ENCODE measurements at regions of chr1 and their contacts with region 1.

Region 1: GRCh38 chr1:22861764-22862440 is 110.8 kb downstream of the LACTBL1 start:
- DNase-seq: peak; percentile 86
- H3K4me3 ChIP-seq: no peak overlapping the region; a peak in 1 of 4 replicates
- H3K27ac ChIP-seq: peak overlapping the region; percentile 31 to 45; a peak in 3 of 4 replicates
- H3K4me1 ChIP-seq: peaks cover 4 to 9% of the 10 kb centered on the region in 2 experiments; a peak in 3 of 4 replicates
- H3K27me3 ChIP-seq: no peaks in the 10 kb centered on the region
- CTCF ChIP-seq: peak; percentile 98
- EP300 ChIP-seq: no peak
- RAD21 ChIP-seq: peak; percentile 88

Region 2: DNA sequence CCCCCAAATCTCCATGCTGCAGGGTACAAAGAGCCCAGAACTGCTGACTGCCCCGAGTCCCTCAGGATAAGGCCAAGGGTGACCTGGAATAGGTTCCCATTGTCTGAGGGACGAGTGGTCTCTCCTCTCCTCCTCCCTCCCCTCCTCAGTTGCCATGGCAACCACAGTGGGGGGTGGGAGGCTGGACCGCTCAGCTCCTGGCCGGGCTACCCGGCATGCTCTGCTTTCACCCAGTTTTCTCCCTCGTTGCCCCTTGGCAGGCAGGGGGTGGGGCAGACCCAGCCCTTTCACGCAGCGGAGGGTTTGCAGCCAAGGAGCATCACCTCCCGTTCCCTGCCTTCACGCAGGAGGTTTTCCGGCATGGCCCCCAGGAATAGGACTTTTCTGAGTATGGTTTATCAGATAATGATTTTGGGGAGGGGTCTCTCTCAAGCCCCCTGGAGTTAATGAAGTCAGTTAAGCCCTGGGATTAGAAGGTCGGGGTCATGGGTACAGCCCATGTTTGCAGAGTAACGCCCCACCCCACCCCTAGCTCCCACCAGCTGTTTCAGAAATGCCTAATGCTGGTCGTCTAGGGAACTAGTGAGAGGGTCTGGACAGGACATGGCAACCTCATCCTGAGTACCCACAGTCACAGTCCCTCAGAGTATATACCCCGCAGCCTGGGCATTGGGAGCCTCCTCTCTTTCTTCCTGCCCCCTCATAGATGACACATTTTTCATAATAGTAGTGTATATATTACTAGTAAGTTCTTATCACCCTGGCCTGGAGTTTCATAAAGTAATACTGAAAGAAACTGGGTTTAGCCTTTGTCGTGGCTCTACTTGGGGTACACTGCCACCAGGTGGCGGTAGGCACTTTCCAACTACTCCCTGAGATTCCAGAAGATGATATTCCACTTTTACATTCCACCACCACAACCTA is 188.2 kb before region 1 on chr1:
- CTCF ChIA-PET with region 1: interaction called, 22 read pairs
- POLR2A ChIA-PET with region 1: no interaction called
- DNase-seq: peak; percentile 87
- H3K4me3 ChIP-seq: no peak overlapping the region; a peak in 1 of 4 replicates
- H3K27ac ChIP-seq: no peak overlapping the region
- H3K4me1 ChIP-seq: no peaks in the 10 kb centered on the region; a peak in 1 of 4 replicates
- H3K27me3 ChIP-seq: peaks cover 12% of the 10 kb centered on the region; the same call in 1 of the 2 replicates
- CTCF ChIP-seq: peak; percentile 95
- EP300 ChIP-seq: no peak
- RAD21 ChIP-seq: peak; percentile 94

Region 3: GRCh38 chr1:22754106-22754768 is 107.7 kb before region 1 on chr1:
- CTCF ChIA-PET with region 1: no interaction called
- POLR2A ChIA-PET with region 1: no interaction called
- DNase-seq: no peak
- H3K4me3 ChIP-seq: no peak overlapping the region
- H3K27ac ChIP-seq: peak overlapping the region; percentile 67 to 95
- H3K4me1 ChIP-seq: peaks cover 28 to 34% of the 10 kb centered on the region in 2 experiments
- H3K27me3 ChIP-seq: no peaks in the 10 kb centered on the region
- CTCF ChIP-seq: no peak
- EP300 ChIP-seq: no peak
- RAD21 ChIP-seq: no peak

Region 4: GRCh38 chr1:22767852-22768251 is 94.0 kb before region 1 on chr1:
- CTCF ChIA-PET with region 1: interaction called, 10 read pairs
- POLR2A ChIA-PET with region 1: no interaction called
- DNase-seq: no peak
- H3K4me3 ChIP-seq: no peak overlapping the region
- H3K27ac ChIP-seq: no peak overlapping the region
- H3K4me1 ChIP-seq: no peaks in the 10 kb centered on the region; a peak in 1 of 4 replicates
- H3K27me3 ChIP-seq: no peaks in the 10 kb centered on the region
- CTCF ChIP-seq: no peak
- EP300 ChIP-seq: no peak
- RAD21 ChIP-seq: no peak

Region 5: DNA sequence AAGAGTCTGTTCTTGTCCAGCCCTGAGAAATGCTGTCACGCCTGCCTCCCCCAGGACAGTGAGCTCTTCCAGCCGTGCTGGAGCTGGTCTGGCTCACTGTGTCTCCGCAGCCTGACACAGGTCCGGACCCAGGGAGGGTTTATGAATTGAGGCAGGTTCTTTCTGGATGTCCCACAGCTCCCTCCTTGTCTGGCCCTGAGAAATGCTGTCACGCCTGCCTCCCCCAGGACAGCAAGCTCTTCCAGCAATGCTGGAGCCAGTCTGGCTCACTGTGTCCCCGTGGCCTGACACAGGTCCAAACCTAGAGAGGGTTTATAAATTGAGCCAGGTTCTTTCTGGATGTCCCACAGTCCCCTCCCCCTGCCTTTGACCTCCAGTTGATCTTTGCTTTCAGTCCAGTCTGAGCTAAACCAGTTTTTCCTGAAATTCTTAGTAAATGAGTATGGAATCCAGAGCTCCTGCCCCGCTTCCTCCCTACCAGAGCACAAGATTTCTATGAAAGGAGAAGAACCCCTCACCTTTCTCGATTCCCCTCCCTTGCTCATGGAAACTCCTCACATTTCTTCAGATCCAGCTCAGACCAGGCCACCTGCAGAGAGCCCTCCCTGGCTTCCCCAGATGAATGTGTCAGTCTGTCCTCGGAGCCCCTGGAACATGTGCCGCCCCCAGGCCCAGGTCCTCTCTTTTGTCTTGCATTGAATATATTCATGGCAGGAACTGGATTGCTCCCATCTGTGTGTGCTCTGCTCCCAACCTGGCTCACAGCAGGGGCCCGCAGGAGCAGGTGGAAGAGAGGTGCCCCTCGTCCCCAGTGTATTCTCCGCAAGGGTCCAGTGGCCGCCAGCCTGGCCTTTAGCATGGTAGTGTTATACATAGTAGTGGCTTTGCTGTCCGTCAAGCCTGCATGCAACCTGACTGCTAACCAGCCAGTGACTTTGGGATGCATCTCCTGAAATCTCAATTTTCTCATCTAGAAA is 35.0 kb before region 1 on chr1:
- CTCF ChIA-PET with region 1: interaction called, 14 read pairs
- POLR2A ChIA-PET with region 1: no interaction called
- DNase-seq: no peak
- H3K4me3 ChIP-seq: no peak overlapping the region
- H3K27ac ChIP-seq: peak overlapping the region; percentile 87 to 90
- H3K4me1 ChIP-seq: peaks cover 44 to 52% of the 10 kb centered on the region in 2 experiments
- H3K27me3 ChIP-seq: no peaks in the 10 kb centered on the region
- CTCF ChIP-seq: no peak
- EP300 ChIP-seq: peak in 1 of 2 experiments; percentile 49; a peak in 1 of 4 replicates
- RAD21 ChIP-seq: no peak

Region 6: DNA sequence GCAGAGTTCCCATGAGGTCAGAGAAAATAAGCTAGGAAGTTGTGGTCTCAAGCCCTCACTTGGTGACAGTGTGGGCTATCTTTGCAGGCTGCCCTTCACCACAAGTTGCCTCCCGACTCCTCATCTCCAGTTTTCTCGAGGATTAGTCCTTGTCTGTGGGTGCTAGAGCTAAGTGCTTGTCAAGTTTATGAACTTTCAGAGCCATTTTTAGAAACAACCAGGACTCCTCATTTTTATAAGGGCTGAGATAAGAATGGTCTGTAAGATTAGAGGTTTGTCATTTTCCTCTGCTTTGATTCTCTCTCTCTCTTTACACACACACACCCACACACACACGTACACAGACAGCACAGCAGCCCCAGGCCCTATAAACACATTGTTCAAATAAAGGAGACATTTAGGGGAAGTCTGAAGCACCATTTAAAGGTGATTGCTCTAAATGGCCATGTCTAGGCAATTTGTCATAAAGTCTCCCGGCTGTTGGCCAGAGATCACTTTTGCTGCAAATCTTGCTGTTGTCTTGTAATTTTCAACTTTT is 16.4 kb before region 1 on chr1:
- CTCF ChIA-PET with region 1: interaction called, 67 read pairs
- POLR2A ChIA-PET with region 1: no interaction called
- DNase-seq: no peak
- H3K4me3 ChIP-seq: no peak overlapping the region
- H3K27ac ChIP-seq: no peak overlapping the region; a peak in 1 of 4 replicates
- H3K4me1 ChIP-seq: peaks cover 0 to 19% of the 10 kb centered on the region in 2 experiments; a peak in 1 of 4 replicates
- H3K27me3 ChIP-seq: no peaks in the 10 kb centered on the region
- CTCF ChIP-seq: no peak
- EP300 ChIP-seq: peak in 1 of 2 experiments; percentile 13; a peak in 1 of 4 replicates
- RAD21 ChIP-seq: no peak

Region 7: DNA sequence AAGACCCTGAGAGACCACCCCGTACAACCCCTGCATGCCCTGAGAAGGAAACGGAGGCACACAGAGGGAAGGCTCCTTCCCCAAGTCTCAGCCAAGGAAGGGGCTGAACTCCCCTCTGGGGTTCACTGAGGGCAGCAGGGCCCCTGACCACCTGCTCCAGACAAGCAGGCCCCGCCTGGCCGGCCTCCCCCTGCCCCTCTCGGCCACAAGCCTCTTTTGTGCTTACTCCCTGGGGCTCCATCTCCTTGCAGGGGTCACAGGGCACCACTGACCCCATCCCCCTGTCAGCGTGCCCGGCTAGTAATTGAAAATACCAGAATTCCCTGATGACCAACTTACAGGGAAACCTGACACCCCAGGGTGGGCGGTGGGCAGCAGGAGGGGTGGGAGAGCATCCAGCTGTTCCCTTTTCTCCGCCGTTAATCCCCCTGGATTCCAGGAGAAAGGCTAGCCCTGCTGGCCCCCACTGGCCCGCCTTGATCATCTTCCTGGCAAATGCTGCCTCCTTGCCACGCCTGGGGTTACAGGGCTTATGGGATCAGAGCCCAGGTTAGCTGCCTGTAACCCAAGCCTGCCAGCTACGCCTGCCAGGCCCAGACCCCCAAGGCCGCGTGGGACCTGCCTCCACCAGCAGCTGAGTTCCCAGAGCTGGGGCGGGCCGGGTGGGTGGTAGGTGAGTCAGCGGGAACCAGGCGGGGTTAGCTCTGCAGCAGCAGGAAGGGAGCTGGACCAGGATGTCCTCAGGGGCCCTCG is 14.6 kb after region 1 on chr1:
- CTCF ChIA-PET with region 1: interaction called, 23 read pairs
- POLR2A ChIA-PET with region 1: no interaction called
- DNase-seq: no peak
- H3K4me3 ChIP-seq: no peak overlapping the region
- H3K27ac ChIP-seq: peak overlapping the region in 1 of 2 experiments; percentile 22; a peak in 1 of 4 replicates
- H3K4me1 ChIP-seq: peaks cover 0 to 8% of the 10 kb centered on the region in 2 experiments; a peak in 3 of 4 replicates
- H3K27me3 ChIP-seq: no peaks in the 10 kb centered on the region
- CTCF ChIP-seq: no peak
- EP300 ChIP-seq: no peak
- RAD21 ChIP-seq: no peak

Region 8: GRCh38 chr1:22930235-22930912 is 68.5 kb after region 1 on chr1:
- CTCF ChIA-PET with region 1: interaction called, 11 read pairs
- POLR2A ChIA-PET with region 1: no interaction called
- DNase-seq: peak; percentile 89
- H3K4me3 ChIP-seq: no peak overlapping the region
- H3K27ac ChIP-seq: no peak overlapping the region
- H3K4me1 ChIP-seq: no peaks in the 10 kb centered on the region
- H3K27me3 ChIP-seq: no peaks in the 10 kb centered on the region; the same call in 1 of the 2 replicates
- CTCF ChIP-seq: peak; percentile 80
- EP300 ChIP-seq: no peak
- RAD21 ChIP-seq: peak; percentile 88

Region 9: GRCh38 chr1:22941257-22941656 is 79.4 kb after region 1 on chr1:
- CTCF ChIA-PET with region 1: no interaction called
- POLR2A ChIA-PET with region 1: no interaction called
- DNase-seq: no peak
- H3K4me3 ChIP-seq: no peak overlapping the region
- H3K27ac ChIP-seq: no peak overlapping the region
- H3K4me1 ChIP-seq: no peaks in the 10 kb centered on the region
- H3K27me3 ChIP-seq: no peaks in the 10 kb centered on the region; the same call in 1 of the 2 replicates
- CTCF ChIP-seq: no peak
- EP300 ChIP-seq: no peak
- RAD21 ChIP-seq: no peak